HEK293 (cell line): ENCODE measurements at regions of chr10 and their contacts with region 1.

Region 1: DNA sequence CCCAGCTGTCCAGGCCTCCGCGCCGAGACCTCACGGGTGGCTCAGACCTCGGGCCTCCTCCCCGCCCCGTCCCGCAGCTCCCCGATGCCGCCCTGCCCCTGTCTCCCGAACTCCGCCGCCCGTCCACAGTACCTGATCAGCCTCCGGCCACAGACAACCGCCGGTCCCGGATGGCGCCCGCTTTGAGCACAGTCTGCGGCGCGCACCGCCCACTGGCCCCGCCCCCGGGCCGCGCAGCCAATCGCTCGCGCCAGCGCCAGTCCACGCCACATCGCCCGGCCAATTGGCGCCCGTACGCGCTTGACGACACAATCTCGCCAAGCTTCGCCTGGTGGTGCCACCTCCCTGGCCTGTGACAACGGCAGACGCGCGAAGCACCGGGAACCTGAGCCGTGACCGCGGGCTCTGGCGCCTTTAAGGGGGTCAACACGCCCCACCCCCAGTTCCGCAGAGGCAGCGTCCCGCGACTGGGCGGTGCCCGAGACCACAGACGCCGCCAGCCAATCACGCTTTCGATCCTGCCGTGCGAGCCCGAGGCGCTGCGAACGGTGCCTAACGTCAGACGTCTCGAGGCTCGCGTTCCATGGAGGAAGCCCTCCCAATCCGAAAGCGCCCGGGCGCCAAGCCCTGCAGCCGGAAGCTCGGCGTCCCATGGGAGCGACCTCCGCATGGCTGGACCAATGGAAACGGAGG is at the start of gene IDI1:
- H3K4me3 ChIP-seq: peak within 1 kb of the TSS; percentile 65
- H3K27ac ChIP-seq: peak within 1 kb of the TSS; percentile 97
- H3K4me1 ChIP-seq: 0 out of 2 replicates have a peak, but pooled peaks cover 4% of the 10 kb centered on the region
- CTCF ChIP-seq: no peak

Region 2: DNA sequence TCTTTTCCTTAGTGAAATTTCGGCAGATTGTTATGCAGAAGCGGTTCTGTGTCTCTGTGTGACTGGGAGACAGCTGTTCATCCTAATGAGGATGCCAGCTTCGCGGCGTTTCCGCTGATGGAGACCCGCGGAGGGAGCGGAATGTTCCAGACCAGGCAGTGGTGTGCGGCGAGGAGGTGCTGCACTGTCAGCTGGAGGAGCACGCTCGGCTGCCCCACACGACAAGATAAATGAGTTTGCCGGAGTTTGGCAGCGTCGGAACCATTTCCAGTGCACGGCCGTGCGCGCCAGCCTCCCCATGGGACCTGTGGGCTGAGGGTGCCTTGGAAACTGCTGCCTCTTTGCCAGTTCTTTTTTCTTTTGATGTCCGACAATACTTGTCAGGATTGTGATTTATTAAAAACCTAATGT is 71.9 kb after region 1 on chr10:
- CTCF ChIA-PET with region 1: no interaction called
- POLR2A ChIA-PET with region 1: interaction called, 10 read pairs
- H3K4me3 ChIP-seq: no peak overlapping the region
- H3K27ac ChIP-seq: no peak overlapping the region
- H3K4me1 ChIP-seq: no peaks in the 10 kb centered on the region
- CTCF ChIP-seq: no peak